ENCODE measurements at regions of chr19 and their contacts with region 1.

Region 1: GRCh38 chr19:11570039-11570462 is 7.4 kb downstream of the ACP5 start:
- DNase-seq: no peak
- H3K4me3 ChIP-seq: no peak overlapping the region
- CTCF ChIP-seq: no peak

Region 2: DNA sequence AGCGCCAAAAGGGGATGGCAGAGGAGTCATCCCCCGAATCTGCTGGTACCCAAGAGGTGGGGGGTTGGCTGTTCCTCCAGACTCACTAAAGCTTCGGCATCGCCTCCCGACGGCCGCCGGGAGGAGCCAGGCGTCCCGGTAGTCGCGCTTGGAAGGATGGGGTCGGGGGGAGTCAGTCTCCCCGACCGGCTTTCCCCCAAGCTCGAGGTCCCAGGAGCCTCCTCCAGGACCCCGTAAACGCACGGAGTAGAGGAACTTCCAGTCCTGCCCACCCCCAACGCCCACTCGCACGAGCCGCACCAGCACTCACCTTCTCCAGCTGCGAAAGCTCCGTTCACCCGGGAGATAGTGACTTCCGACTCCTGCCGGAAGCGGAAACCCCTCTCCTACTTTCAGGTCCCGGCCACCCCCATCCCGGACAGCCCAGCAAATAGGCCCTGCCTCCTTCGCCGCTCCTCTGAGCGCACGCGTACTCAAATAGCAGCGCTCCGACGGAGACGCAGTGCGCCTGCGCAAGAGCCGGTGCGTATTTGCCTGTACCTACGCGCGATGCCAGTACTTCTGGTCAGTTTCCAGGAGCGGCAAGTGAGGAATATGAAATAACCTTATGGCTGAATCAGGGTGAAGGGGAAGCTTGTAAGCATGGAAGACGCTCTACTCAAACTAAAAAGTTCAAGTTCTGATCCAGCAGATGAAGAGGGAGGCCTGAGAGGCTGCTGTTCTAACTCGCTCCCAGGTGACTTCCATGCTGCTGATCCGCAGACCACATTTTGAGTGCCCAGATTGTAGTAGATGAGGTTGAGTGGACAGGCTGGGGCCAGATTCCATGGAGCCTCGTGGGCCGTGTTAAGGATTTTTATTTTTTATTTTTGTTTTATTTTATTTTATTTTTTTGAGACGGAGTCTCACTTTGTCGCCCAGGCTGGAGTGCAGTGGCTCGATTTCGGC is 10.9 kb before region 1 on chr19 and contains the start of gene ELOF1:
- CTCF ChIA-PET with region 1: interaction called, 123 read pairs
- POLR2A ChIA-PET with region 1: no interaction called
- DNase-seq: peak; percentile 79
- H3K4me3 ChIP-seq: peak within 1 kb of the TSS; percentile 87
- CTCF ChIP-seq: peak; percentile 37